B cell (primary cell): ENCODE measurements at regions of chr10 and their contacts with region 1.

Region 1: GRCh38 chr10:100433253-100434240 is 29.3 kb upstream of the WNT8B start:
- DNase-seq: peak; percentile 94
- ATAC-seq: peak; percentile 99
- H3K4me3 ChIP-seq: no peak overlapping the region
- H3K4me3 Mint-ChIP-seq: no peak overlapping the region
- H3K27ac ChIP-seq: no peak overlapping the region
- H3K27ac Mint-ChIP-seq: no peak overlapping the region
- H3K4me1 ChIP-seq: no peaks in the 10 kb centered on the region
- H3K4me1 Mint-ChIP-seq: no peaks in the 10 kb centered on the region
- H3K27me3 ChIP-seq: no peaks in the 10 kb centered on the region
- H3K27me3 Mint-ChIP-seq: peaks cover 17% of the 10 kb centered on the region
- CTCF ChIP-seq: peak; percentile 100

Region 2: DNA sequence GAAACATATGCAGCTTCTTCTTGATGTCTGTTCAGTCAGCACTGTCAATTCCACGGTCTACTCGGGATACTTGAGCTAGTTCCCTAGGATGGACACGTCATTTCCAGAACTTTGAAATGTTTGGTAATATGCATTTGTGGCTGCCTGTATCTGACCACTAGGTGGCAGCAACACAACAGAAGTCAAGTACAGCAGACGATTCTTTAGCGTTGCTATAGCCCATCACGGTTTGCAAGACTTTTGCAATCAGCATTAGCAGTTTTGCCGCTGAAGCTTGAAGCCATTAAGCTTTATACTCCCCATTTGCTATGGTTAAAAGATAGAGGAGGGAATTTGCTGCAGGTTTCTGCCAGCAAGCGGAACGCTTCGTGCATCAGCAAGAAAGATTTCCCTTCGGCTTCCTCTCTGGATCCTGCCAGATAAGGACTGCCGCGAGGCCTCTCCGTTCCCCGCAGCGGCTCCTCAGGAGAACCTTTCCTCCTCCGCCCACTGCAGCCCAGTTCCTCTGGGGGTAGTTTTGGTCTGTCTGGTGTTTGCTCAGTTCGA is 587.6 kb before region 1 on chr10:
- CTCF ChIA-PET with region 1: no interaction called
- POLR2A ChIA-PET with region 1: no interaction called
- intact Hi-C with region 1: loop called (anchors 5 kb)
- DNase-seq: peak; percentile 85
- ATAC-seq: peak; percentile 84
- H3K4me3 ChIP-seq: peak overlapping the region in 4 of 5 experiments; percentile 10 to 61 (median 41)
- H3K4me3 Mint-ChIP-seq: peak overlapping the region; percentile 75
- H3K27ac ChIP-seq: no peak overlapping the region
- H3K27ac Mint-ChIP-seq: no peak overlapping the region
- H3K4me1 ChIP-seq: peaks cover 0 to 10% of the 10 kb centered on the region in 2 donors
- H3K4me1 Mint-ChIP-seq: peaks cover 7% of the 10 kb centered on the region
- H3K27me3 ChIP-seq: peaks cover 0 to 7% (median 0%) of the 10 kb centered on the region in 4 experiments
- H3K27me3 Mint-ChIP-seq: no peaks in the 10 kb centered on the region
- CTCF ChIP-seq: peak; percentile 93

Region 3: GRCh38 chr10:100327007-100327717 is 106.4 kb before region 1 on chr10:
- CTCF ChIA-PET with region 1: interaction called, 12 read pairs
- POLR2A ChIA-PET with region 1: no interaction called
- intact Hi-C with region 1: no loop called
- DNase-seq: peak; percentile 90
- ATAC-seq: peak; percentile 100
- H3K4me3 ChIP-seq: peak overlapping the region in 2 of 5 experiments; percentile 19 to 28
- H3K4me3 Mint-ChIP-seq: peak overlapping the region; percentile 60
- H3K27ac ChIP-seq: peak overlapping the region; percentile 77 to 92
- H3K27ac Mint-ChIP-seq: peak overlapping the region; percentile 91
- H3K4me1 ChIP-seq: peaks cover 22 to 23% of the 10 kb centered on the region in 2 donors
- H3K4me1 Mint-ChIP-seq: peaks cover 29% of the 10 kb centered on the region
- H3K27me3 ChIP-seq: peaks cover 0 to 3% (median 0%) of the 10 kb centered on the region in 4 experiments
- H3K27me3 Mint-ChIP-seq: peaks cover 15% of the 10 kb centered on the region
- CTCF ChIP-seq: no peak

Region 4: GRCh38 chr10:100346765-100347567 is 86.6 kb before region 1 on chr10 and contains the start of gene SCD:
- CTCF ChIA-PET with region 1: interaction called, 218 read pairs
- POLR2A ChIA-PET with region 1: no interaction called
- intact Hi-C with region 1: no loop called
- DNase-seq: peak; percentile 92
- ATAC-seq: peak; percentile 95
- H3K4me3 ChIP-seq: peak within 1 kb of the TSS; percentile 62 to 74 (median 72)
- H3K4me3 Mint-ChIP-seq: peak within 1 kb of the TSS; percentile 91
- H3K27ac ChIP-seq: peak within 1 kb of the TSS; percentile 64 to 85
- H3K27ac Mint-ChIP-seq: peak within 1 kb of the TSS; percentile 78
- H3K4me1 ChIP-seq: peaks cover 14 to 23% of the 10 kb centered on the region in 2 donors
- H3K4me1 Mint-ChIP-seq: peaks cover 22% of the 10 kb centered on the region
- H3K27me3 ChIP-seq: peaks cover 0 to 8% (median 0%) of the 10 kb centered on the region in 4 experiments
- H3K27me3 Mint-ChIP-seq: no peaks in the 10 kb centered on the region
- CTCF ChIP-seq: no peak
- total RNA-seq, gene SCD: 5.1 and 5.6 TPM in 2 replicates

Region 5: DNA sequence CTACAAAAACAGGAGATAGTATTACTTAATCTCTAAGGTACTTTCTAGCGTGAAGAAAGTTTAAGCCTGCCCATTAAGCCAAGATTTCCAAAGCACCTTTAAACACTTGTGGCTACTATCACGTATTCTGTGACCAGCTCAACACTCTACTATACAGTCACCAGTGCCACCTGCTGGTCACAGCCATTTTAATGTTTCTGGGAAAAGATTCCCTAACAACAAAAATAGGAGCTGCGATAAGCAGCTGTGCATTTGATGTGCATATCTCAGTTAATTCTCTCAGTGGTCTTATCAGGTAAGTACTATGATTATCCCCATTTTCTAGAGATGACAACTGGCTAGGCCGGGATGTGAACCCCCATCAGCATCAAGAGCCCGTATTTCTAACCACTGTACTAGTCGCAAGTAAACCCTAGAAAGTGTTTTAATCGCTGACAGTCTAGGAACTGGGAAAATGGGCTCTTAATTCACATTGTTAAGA is 85.3 kb after region 1 on chr10:
- CTCF ChIA-PET with region 1: interaction called, 10 read pairs
- POLR2A ChIA-PET with region 1: no interaction called
- intact Hi-C with region 1: loop called (anchors 1 kb)
- DNase-seq: peak; percentile 64
- ATAC-seq: peak; percentile 41
- H3K4me3 ChIP-seq: no peak overlapping the region
- H3K4me3 Mint-ChIP-seq: peak overlapping the region; percentile 66
- H3K27ac ChIP-seq: no peak overlapping the region
- H3K27ac Mint-ChIP-seq: no peak overlapping the region
- H3K4me1 ChIP-seq: peaks cover 13% of the 10 kb centered on the region in 2 donors
- H3K4me1 Mint-ChIP-seq: peaks cover 10% of the 10 kb centered on the region
- H3K27me3 ChIP-seq: peaks cover 0 to 10% (median 5%) of the 10 kb centered on the region in 4 experiments
- H3K27me3 Mint-ChIP-seq: peaks cover 9% of the 10 kb centered on the region
- CTCF ChIP-seq: peak; percentile 84

Region 6: DNA sequence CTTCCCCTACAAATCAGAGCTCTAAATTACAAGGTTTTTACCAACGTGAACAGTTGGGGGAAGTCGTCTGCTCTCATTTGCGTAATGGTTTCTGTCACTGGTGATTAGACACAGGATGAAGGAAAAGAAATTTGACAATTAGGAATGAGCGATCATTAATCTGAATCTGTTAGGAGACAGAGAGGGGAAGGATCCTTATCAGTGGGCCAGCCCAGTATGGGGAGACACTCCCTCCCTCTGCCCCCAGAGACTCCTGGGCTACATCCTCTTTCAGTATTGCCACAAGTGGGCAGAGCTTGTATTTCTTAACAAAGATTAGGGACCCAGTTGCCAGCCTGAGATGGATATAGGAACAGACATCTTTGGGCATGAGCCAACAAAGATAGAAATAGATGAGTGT is 117.6 kb after region 1 on chr10:
- CTCF ChIA-PET with region 1: no interaction called
- POLR2A ChIA-PET with region 1: no interaction called
- intact Hi-C with region 1: no loop called
- DNase-seq: no peak
- ATAC-seq: peak; percentile 43
- H3K4me3 ChIP-seq: no peak overlapping the region
- H3K4me3 Mint-ChIP-seq: no peak overlapping the region
- H3K27ac ChIP-seq: no peak overlapping the region
- H3K27ac Mint-ChIP-seq: no peak overlapping the region
- H3K4me1 ChIP-seq: peaks cover 0 to 13% of the 10 kb centered on the region in 2 donors
- H3K4me1 Mint-ChIP-seq: peaks cover 25% of the 10 kb centered on the region
- H3K27me3 ChIP-seq: no peaks in the 10 kb centered on the region
- H3K27me3 Mint-ChIP-seq: no peaks in the 10 kb centered on the region
- CTCF ChIP-seq: no peak

Region 7: GRCh38 chr10:100878291-100878910 is 444.9 kb after region 1 on chr10:
- CTCF ChIA-PET with region 1: interaction called, 4 read pairs
- POLR2A ChIA-PET with region 1: no interaction called
- intact Hi-C with region 1: loop called (anchors 10 kb)
- DNase-seq: peak; percentile 55
- ATAC-seq: peak; percentile 51
- H3K4me3 ChIP-seq: no peak overlapping the region
- H3K4me3 Mint-ChIP-seq: no peak overlapping the region
- H3K27ac ChIP-seq: no peak overlapping the region
- H3K27ac Mint-ChIP-seq: no peak overlapping the region
- H3K4me1 ChIP-seq: no peaks in the 10 kb centered on the region
- H3K4me1 Mint-ChIP-seq: no peaks in the 10 kb centered on the region
- H3K27me3 ChIP-seq: peaks cover 0 to 11% (median 3%) of the 10 kb centered on the region in 4 experiments
- H3K27me3 Mint-ChIP-seq: peaks cover 29% of the 10 kb centered on the region
- CTCF ChIP-seq: peak; percentile 45